ENCODE measurements at regions of chr2 and their contacts with region 1.

Region 1: DNA sequence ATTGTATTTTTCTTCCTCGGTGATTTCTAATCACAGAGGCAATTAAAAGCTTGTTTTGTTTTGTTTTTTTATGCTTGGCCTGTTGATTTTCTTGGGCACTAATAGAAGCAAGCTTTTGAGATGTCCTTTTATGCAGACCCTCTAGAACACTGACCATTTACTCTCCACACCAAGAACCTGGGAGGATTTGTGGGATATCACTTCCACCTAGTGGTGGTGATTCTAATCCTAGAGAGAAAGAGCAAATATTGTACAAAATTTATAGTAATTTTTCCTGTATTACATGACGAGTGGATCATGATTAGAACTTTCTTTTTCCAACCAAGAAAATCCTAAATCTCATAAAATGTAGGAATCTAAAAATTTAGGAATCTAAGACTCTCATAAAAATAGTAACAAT is 23.4 kb downstream of the NEMP2 start:
- DNase-seq: peak in 2 of 4 experiments; percentile 43 to 58
- ATAC-seq: peak; percentile 86
- H3K4me3 ChIP-seq: no peak overlapping the region
- H3K27ac ChIP-seq: no peak overlapping the region
- H3K4me1 ChIP-seq: no peaks in the 10 kb centered on the region; a peak in 2 of 5 replicates
- H3K27me3 ChIP-seq: no peaks in the 10 kb centered on the region
- CTCF ChIP-seq: peak; percentile 44 to 69 (median 50); a peak in 4 of 6 replicates
- EP300 ChIP-seq: no peak
- POLR2A ChIP-seq: no peak
- RAD21 ChIP-seq: peak; percentile 78 to 90

Region 2: GRCh38 chr2:189798312-189799029 is 712.6 kb before region 1 on chr2:
- CTCF ChIA-PET with region 1: interaction called, 10 read pairs
- POLR2A ChIA-PET with region 1: no interaction called
- in situ Hi-C with region 1: no loop called
- intact Hi-C with region 1: no loop called
- DNase-seq: no peak
- ATAC-seq: peak; percentile 74
- H3K4me3 ChIP-seq: no peak overlapping the region
- H3K27ac ChIP-seq: no peak overlapping the region
- H3K4me1 ChIP-seq: no peaks in the 10 kb centered on the region
- H3K27me3 ChIP-seq: no peaks in the 10 kb centered on the region
- CTCF ChIP-seq: peak; percentile 8 to 45 (median 26); a peak in 3 of 6 replicates
- EP300 ChIP-seq: no peak
- POLR2A ChIP-seq: no peak
- RAD21 ChIP-seq: peak; percentile 18 to 49; a peak in 3 of 4 replicates

Region 3: DNA sequence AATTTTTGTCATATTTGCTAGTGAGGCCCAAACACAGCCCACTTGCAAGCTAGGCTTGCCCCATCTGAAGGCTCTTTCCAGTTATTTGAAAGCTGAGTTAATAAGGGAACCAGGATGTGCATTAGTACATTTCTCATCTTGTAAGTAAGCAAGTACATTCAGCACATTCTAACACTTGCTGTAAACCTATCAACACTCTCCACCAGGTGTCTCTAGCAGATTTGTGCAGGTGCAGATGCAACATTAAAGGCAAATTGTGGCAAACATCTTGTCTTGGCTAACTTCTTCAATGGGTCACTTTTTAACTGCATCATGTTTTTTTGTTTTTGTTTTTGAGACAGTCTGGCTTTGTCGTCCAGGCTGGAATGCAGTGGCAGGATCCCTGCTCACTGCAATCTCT is 128.3 kb before region 1 on chr2:
- CTCF ChIA-PET with region 1: interaction called, 16 read pairs
- POLR2A ChIA-PET with region 1: no interaction called
- in situ Hi-C with region 1: no loop called
- intact Hi-C with region 1: loop called (anchors 1 kb)
- DNase-seq: peak; percentile 23 to 63 (median 31)
- ATAC-seq: peak; percentile 43
- H3K4me3 ChIP-seq: no peak overlapping the region
- H3K27ac ChIP-seq: no peak overlapping the region
- H3K4me1 ChIP-seq: peaks cover 5 to 33% of the 10 kb centered on the region in 2 experiments; a peak in 4 of 5 replicates
- H3K27me3 ChIP-seq: no peaks in the 10 kb centered on the region
- CTCF ChIP-seq: peak; percentile 41 to 66 (median 56); a peak in 5 of 6 replicates
- EP300 ChIP-seq: no peak
- POLR2A ChIP-seq: no peak
- RAD21 ChIP-seq: peak; percentile 46 to 89; a peak in 3 of 4 replicates